ENCODE measurements at regions of chr11 and their contacts with region 1.

Region 1: DNA sequence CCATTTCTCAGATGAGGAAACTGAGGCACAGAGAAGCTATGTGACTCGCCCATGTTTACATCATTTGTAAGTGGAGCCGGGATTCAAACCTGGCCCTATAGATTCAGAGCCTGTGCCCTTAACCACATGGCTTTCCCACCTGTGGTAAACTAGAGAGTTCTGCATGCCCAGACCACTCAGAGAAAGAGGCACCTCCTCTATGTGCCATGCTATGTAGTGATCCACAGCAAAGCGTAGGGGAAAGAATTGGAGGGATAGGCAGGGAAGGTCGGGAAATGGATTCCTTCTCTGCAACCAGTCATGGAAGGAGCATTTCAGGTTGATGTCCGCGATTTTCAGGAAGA is 15.4 kb upstream of the POU2AF2 start:
- DNase-seq: no peak
- ATAC-seq: peak; percentile 70
- H3K4me3 ChIP-seq: peak overlapping the region in 1 of 3 experiments; percentile 72; a peak in 3 of 6 replicates
- H3K27ac ChIP-seq: no peak overlapping the region
- H3K4me1 ChIP-seq: peaks cover 11% of the 10 kb centered on the region
- H3K27me3 ChIP-seq: peaks cover 0 to 15% of the 10 kb centered on the region in 2 experiments; a peak in 2 of 5 replicates
- CTCF ChIP-seq: no peak
- EP300 ChIP-seq: no peak
- POLR2A ChIP-seq: no peak
- RAD21 ChIP-seq: no peak

Region 2: DNA sequence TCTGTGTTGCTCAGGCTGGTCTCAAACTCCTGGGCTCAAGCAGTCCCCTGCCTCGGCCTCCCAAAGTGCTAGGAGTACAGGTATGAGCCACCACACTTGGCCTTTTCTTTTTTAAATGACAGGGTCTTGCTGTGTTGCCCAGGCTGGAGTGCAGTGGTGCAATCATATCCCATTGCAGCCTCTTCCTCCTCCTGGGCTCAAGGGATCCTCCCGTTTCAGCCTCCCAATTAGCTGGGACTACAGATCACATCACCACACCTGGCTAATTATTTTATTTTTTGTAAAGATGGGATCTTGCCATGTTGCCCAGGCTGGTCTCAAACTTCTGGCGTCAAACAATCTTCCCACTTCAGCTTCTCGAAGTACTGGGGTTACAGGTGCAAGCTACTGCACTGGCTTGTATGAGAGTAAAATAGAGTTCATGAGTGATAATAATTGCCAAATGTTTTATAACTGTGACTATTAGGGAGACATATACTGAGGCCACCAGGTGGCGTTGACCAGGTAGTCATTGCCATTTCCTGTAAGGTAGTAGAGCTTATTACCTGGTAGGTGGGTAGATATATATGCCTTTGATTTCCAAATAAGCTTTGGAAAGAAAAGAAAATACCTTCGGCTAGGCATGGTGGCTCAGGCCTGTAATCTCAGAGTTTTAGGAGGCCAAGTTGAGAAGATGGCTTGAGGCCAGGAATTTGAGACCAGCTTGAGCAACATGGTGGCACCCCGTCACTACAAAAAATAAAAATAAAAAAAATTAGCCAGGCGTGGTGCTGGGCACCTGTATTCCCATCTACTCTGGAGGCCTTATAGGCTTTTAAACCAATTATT is 794.9 kb before region 1 on chr11:
- CTCF ChIA-PET with region 1: no interaction called
- POLR2A ChIA-PET with region 1: no interaction called
- in situ Hi-C with region 1: no loop called
- intact Hi-C with region 1: loop called (anchors 5 kb)
- DNase-seq: peak; percentile 15
- ATAC-seq: no peak
- H3K4me3 ChIP-seq: no peak overlapping the region
- H3K27ac ChIP-seq: no peak overlapping the region
- H3K4me1 ChIP-seq: peaks cover 26% of the 10 kb centered on the region
- H3K27me3 ChIP-seq: no peaks in the 10 kb centered on the region
- CTCF ChIP-seq: peak; percentile 30; the same call in 1 of the 2 replicates
- EP300 ChIP-seq: no peak
- POLR2A ChIP-seq: no peak
- RAD21 ChIP-seq: no peak

Region 3: DNA sequence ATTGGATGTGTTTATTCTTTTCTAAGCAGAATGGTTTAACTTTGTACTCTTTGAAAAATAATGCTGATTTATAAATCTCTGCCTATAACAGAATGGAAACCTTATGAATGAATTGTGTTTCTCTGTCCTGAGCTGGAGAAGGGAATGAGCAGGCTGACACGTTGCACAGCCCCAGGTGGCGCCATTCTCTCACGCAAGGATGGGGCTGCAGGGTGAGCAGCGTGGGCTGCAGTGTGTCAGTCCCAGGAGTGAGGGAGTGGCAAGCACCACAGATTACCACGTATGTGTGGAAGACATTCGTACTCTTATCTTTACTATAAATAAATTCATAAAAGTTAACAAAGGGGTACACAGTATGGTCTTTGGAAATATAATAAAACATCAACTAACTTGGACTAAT is 766.9 kb before region 1 on chr11:
- CTCF ChIA-PET with region 1: interaction called, 6 read pairs
- POLR2A ChIA-PET with region 1: no interaction called
- in situ Hi-C with region 1: loop called (anchors 10 kb)
- intact Hi-C with region 1: loop called (anchors 1 kb)
- DNase-seq: no peak
- ATAC-seq: peak; percentile 91
- H3K4me3 ChIP-seq: no peak overlapping the region
- H3K27ac ChIP-seq: no peak overlapping the region
- H3K4me1 ChIP-seq: peaks cover 8% of the 10 kb centered on the region
- H3K27me3 ChIP-seq: no peaks in the 10 kb centered on the region
- CTCF ChIP-seq: peak; percentile 80
- EP300 ChIP-seq: no peak
- POLR2A ChIP-seq: no peak
- RAD21 ChIP-seq: no peak

Region 4: GRCh38 chr11:111446404-111447111 is 216.5 kb after region 1 on chr11:
- CTCF ChIA-PET with region 1: no interaction called
- POLR2A ChIA-PET with region 1: no interaction called
- in situ Hi-C with region 1: no loop called
- intact Hi-C with region 1: loop called (anchors 5 kb)
- DNase-seq: peak; percentile 82
- ATAC-seq: peak; percentile 95
- H3K4me3 ChIP-seq: no peak overlapping the region
- H3K27ac ChIP-seq: no peak overlapping the region
- H3K4me1 ChIP-seq: peaks cover 44% of the 10 kb centered on the region
- H3K27me3 ChIP-seq: peaks cover 3 to 5% of the 10 kb centered on the region in 2 experiments; a peak in 3 of 5 replicates
- CTCF ChIP-seq: peak; percentile 98
- EP300 ChIP-seq: no peak
- POLR2A ChIP-seq: no peak
- RAD21 ChIP-seq: peak; percentile 91

Region 5: DNA sequence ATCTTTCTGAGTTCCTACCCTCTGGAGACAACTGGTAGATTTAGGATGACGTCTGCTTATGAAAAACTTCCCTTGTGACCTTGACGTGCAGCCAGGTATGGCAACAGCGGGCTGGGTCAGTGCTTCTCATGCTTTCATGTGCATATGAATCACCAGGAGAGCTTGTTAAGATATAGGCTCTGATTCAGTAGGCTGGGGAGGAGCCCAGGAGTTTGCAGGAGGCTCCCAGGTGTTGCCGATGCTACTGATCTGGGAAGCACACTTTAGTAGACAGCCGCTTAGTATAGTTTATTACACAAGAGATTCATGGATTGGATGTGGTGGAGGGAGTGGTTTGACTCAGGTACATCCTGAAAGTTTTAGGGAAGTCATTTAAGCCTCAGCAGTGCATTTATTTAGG is 730.8 kb after region 1 on chr11:
- CTCF ChIA-PET with region 1: no interaction called
- POLR2A ChIA-PET with region 1: no interaction called
- in situ Hi-C with region 1: no loop called
- intact Hi-C with region 1: no loop called
- DNase-seq: no peak
- ATAC-seq: no peak
- H3K4me3 ChIP-seq: no peak overlapping the region
- H3K27ac ChIP-seq: no peak overlapping the region
- H3K4me1 ChIP-seq: 0 out of 2 replicates have a peak, but pooled peaks cover 10% of the 10 kb centered on the region
- H3K27me3 ChIP-seq: no peaks in the 10 kb centered on the region
- CTCF ChIP-seq: no peak
- EP300 ChIP-seq: no peak
- POLR2A ChIP-seq: no peak
- RAD21 ChIP-seq: no peak

Measured in HepG2 (cell line).